ENCODE measurements at regions of chr2 and their contacts with region 1.

Region 1: DNA sequence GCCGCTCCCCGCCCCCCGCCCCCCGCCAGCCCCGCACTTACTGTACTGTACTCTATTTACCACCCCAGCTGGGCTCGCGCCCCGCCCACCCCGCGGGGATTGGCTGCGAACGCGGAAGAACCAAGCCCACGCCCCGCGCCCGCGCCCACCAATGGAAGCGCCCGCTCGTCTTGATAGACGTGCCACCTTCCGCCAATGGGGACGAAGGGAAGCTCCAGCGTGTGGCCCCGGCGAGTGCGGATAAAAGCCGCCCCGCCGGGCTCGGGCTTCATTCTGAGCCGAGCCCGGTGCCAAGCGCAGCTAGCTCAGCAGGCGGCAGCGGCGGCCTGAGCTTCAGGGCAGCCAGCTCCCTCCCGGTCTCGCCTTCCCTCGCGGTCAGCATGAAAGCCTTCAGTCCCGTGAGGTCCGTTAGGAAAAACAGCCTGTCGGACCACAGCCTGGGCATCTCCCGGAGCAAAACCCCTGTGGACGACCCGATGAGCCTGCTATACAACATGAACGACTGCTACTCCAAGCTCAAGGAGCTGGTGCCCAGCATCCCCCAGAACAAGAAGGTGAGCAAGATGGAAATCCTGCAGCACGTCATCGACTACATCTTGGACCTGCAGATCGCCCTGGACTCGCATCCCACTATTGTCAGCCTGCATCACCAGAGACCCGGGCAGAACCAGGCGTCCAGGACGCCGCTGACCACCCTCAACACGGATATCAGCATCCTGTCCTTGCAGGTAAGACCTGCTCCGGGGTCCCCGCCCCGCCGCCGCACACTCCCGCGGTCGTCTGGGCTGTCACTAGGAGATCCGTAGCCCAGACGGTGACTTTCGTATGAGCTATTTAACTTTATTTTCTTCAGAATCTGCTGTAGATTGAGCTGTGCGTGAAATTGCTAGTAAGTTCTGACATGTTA is at the start of gene ID2:
- DNase-seq: peak; percentile 92
- ATAC-seq: peak; percentile 81
- H3K4me3 ChIP-seq: peak within 1 kb of the TSS; percentile 41 to 77 (median 57)
- H3K4me3 Mint-ChIP-seq: peak within 1 kb of the TSS; percentile 92
- H3K27ac ChIP-seq: no peak within 1 kb of the TSS
- H3K27ac Mint-ChIP-seq: peak within 1 kb of the TSS; percentile 71
- H3K4me1 ChIP-seq: peaks cover 43 to 57% of the 10 kb centered on the region in 2 donors
- H3K4me1 Mint-ChIP-seq: peaks cover 54% of the 10 kb centered on the region
- H3K27me3 ChIP-seq: peaks cover 2 to 66% (median 49%) of the 10 kb centered on the region in 4 experiments
- H3K27me3 Mint-ChIP-seq: peaks cover 67% of the 10 kb centered on the region
- CTCF ChIP-seq: no peak
- total RNA-seq, gene ID2: 14.3 and 15.0 TPM in 2 replicates

Region 2: GRCh38 chr2:6909431-6910385 is 1772.3 kb before region 1 on chr2:
- CTCF ChIA-PET with region 1: no interaction called
- POLR2A ChIA-PET with region 1: no interaction called
- intact Hi-C with region 1: loop called (anchors 10 kb)
- DNase-seq: peak; percentile 58
- ATAC-seq: peak; percentile 76
- H3K4me3 ChIP-seq: peak overlapping the region in 1 of 5 experiments; percentile 3
- H3K4me3 Mint-ChIP-seq: peak overlapping the region; percentile 35
- H3K27ac ChIP-seq: peak overlapping the region in 1 of 2 donors; percentile 7
- H3K27ac Mint-ChIP-seq: peak overlapping the region; percentile 11
- H3K4me1 ChIP-seq: peaks cover 24 to 26% of the 10 kb centered on the region in 2 donors
- H3K4me1 Mint-ChIP-seq: peaks cover 27% of the 10 kb centered on the region
- H3K27me3 ChIP-seq: peaks cover 0 to under 1% (median 0%) of the 10 kb centered on the region in 4 experiments
- H3K27me3 Mint-ChIP-seq: no peaks in the 10 kb centered on the region
- CTCF ChIP-seq: no peak

Region 3: GRCh38 chr2:7097348-7097895 is 1584.6 kb before region 1 on chr2:
- CTCF ChIA-PET with region 1: interaction called, 34 read pairs
- POLR2A ChIA-PET with region 1: no interaction called
- intact Hi-C with region 1: loop called (anchors 1 kb)
- DNase-seq: peak; percentile 73
- ATAC-seq: peak; percentile 60
- H3K4me3 ChIP-seq: no peak overlapping the region
- H3K4me3 Mint-ChIP-seq: peak overlapping the region; percentile 38
- H3K27ac ChIP-seq: no peak overlapping the region
- H3K27ac Mint-ChIP-seq: no peak overlapping the region
- H3K4me1 ChIP-seq: peaks cover 4 to 5% of the 10 kb centered on the region in 2 donors
- H3K4me1 Mint-ChIP-seq: peaks cover 10% of the 10 kb centered on the region
- H3K27me3 ChIP-seq: peaks cover 0 to 3% (median 0%) of the 10 kb centered on the region in 4 experiments
- H3K27me3 Mint-ChIP-seq: peaks cover 22% of the 10 kb centered on the region
- CTCF ChIP-seq: peak; percentile 100

Region 4: GRCh38 chr2:7665880-7666279 is 1016.2 kb before region 1 on chr2:
- CTCF ChIA-PET with region 1: no interaction called
- POLR2A ChIA-PET with region 1: no interaction called
- intact Hi-C with region 1: loop called (anchors 10 kb)
- DNase-seq: no peak
- ATAC-seq: no peak
- H3K4me3 ChIP-seq: no peak overlapping the region
- H3K4me3 Mint-ChIP-seq: no peak overlapping the region
- H3K27ac ChIP-seq: no peak overlapping the region
- H3K27ac Mint-ChIP-seq: no peak overlapping the region
- H3K4me1 ChIP-seq: no peaks in the 10 kb centered on the region
- H3K4me1 Mint-ChIP-seq: no peaks in the 10 kb centered on the region
- H3K27me3 ChIP-seq: no peaks in the 10 kb centered on the region
- H3K27me3 Mint-ChIP-seq: no peaks in the 10 kb centered on the region
- CTCF ChIP-seq: no peak

Region 5: GRCh38 chr2:8477552-8478470 is 204.2 kb before region 1 on chr2:
- CTCF ChIA-PET with region 1: no interaction called
- POLR2A ChIA-PET with region 1: no interaction called
- intact Hi-C with region 1: loop called (anchors 5 kb)
- DNase-seq: peak; percentile 80
- ATAC-seq: peak; percentile 71
- H3K4me3 ChIP-seq: peak overlapping the region in 2 of 5 experiments; percentile 16 to 20
- H3K4me3 Mint-ChIP-seq: peak overlapping the region; percentile 69
- H3K27ac ChIP-seq: no peak overlapping the region
- H3K27ac Mint-ChIP-seq: peak overlapping the region; percentile 74
- H3K4me1 ChIP-seq: peaks cover 56 to 57% of the 10 kb centered on the region in 2 donors
- H3K4me1 Mint-ChIP-seq: peaks cover 49% of the 10 kb centered on the region
- H3K27me3 ChIP-seq: peaks cover 0 to 83% (median 70%) of the 10 kb centered on the region in 4 experiments
- H3K27me3 Mint-ChIP-seq: peaks cover 63% of the 10 kb centered on the region
- CTCF ChIP-seq: no peak

Region 6: GRCh38 chr2:8500124-8501058 is 181.6 kb before region 1 on chr2:
- CTCF ChIA-PET with region 1: no interaction called
- POLR2A ChIA-PET with region 1: no interaction called
- intact Hi-C with region 1: no loop called
- DNase-seq: no peak
- ATAC-seq: no peak
- H3K4me3 ChIP-seq: no peak overlapping the region
- H3K4me3 Mint-ChIP-seq: no peak overlapping the region
- H3K27ac ChIP-seq: no peak overlapping the region
- H3K27ac Mint-ChIP-seq: no peak overlapping the region
- H3K4me1 ChIP-seq: no peaks in the 10 kb centered on the region
- H3K4me1 Mint-ChIP-seq: no peaks in the 10 kb centered on the region
- H3K27me3 ChIP-seq: peaks cover 0 to 68% (median 9%) of the 10 kb centered on the region in 4 experiments
- H3K27me3 Mint-ChIP-seq: peaks cover 61% of the 10 kb centered on the region
- CTCF ChIP-seq: no peak

Region 7: DNA sequence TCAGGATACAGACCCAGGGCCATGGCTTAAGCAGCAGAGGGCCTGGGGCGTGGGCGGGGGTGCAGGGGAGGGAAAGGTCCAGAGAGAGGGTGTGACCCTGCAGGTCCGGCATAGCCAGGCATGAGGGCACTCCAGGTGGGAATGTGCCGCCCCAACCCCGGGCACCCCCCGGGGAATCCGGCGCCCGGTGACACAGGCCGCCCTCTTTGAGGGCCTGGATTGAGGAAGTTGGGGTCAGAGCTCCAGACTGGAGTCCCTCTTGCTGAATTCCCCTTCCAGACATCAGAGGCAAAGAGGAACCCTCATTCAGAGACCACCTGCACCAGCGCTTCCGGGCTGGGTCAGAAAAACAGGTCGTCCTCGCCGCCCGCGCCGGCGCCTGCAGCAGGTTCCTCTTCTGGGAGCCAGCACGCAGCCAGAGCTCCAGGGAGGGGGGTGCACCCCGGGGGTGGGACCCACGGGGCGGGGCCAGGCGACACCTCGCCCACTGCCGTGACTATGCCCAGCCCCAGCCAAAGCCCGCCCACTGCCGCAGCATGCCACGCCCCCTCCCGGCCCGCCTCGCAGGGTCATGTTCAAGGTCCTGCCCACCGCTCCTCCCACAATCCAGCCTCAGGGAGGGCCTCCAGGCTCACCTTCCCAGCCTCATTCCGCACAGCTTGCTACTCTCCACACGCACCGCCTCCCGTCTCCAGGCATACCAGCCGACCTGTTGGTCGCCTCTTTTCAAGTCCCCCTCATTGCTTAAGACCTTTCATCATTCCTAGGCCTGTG is 98.5 kb before region 1 on chr2:
- CTCF ChIA-PET with region 1: no interaction called
- POLR2A ChIA-PET with region 1: no interaction called
- intact Hi-C with region 1: loop called (anchors 2 kb)
- DNase-seq: peak; percentile 93
- ATAC-seq: peak; percentile 95
- H3K4me3 ChIP-seq: peak overlapping the region in 4 of 5 experiments; percentile 18 to 49 (median 32)
- H3K4me3 Mint-ChIP-seq: peak overlapping the region; percentile 81
- H3K27ac ChIP-seq: peak overlapping the region in 1 of 2 donors; percentile 73
- H3K27ac Mint-ChIP-seq: peak overlapping the region; percentile 67
- H3K4me1 ChIP-seq: peaks cover 28 to 45% of the 10 kb centered on the region in 2 donors
- H3K4me1 Mint-ChIP-seq: peaks cover 42% of the 10 kb centered on the region
- H3K27me3 ChIP-seq: peaks cover 0 to 33% (median 6%) of the 10 kb centered on the region in 4 experiments
- H3K27me3 Mint-ChIP-seq: peaks cover 36% of the 10 kb centered on the region
- CTCF ChIP-seq: no peak

Measured in B cell (primary cell).